IMR-90 (cell line): ENCODE measurements at regions of chr12 and their contacts with region 1.

Region 1: GRCh38 chr12:48851883-48852733 is at the start of gene DDX23:
- DNase-seq: peak; percentile 97
- ATAC-seq: peak; percentile 98
- H3K4me3 ChIP-seq: peak within 1 kb of the TSS; percentile 78
- H3K27ac ChIP-seq: peak within 1 kb of the TSS; percentile 90
- H3K4me1 ChIP-seq: peaks cover 6% of the 10 kb centered on the region
- H3K27me3 ChIP-seq: peaks cover 6% of the 10 kb centered on the region; the same call in 1 of the 2 replicates
- CTCF ChIP-seq: no peak
- POLR2A ChIP-seq: peak; percentile 68; the same call in 1 of the 2 replicates
- RAD21 ChIP-seq: no peak
- total RNA-seq, gene DDX23: 81.9 and 92.5 TPM in 2 replicates

Region 2: GRCh38 chr12:48472259-48472658 is 379.8 kb before region 1 on chr12 and contains the start of gene ANP32D:
- CTCF ChIA-PET with region 1: no interaction called
- POLR2A ChIA-PET with region 1: no interaction called
- dilution Hi-C with region 1: no loop called
- in situ Hi-C with region 1: no loop called
- intact Hi-C with region 1: no loop called
- DNase-seq: no peak
- ATAC-seq: no peak
- H3K4me3 ChIP-seq: no peak within 1 kb of the TSS
- H3K27ac ChIP-seq: no peak within 1 kb of the TSS
- H3K4me1 ChIP-seq: no peaks in the 10 kb centered on the region
- H3K27me3 ChIP-seq: no peaks in the 10 kb centered on the region
- CTCF ChIP-seq: no peak
- POLR2A ChIP-seq: no peak
- RAD21 ChIP-seq: no peak
- total RNA-seq, gene ANP32D: not detected in 2 replicates

Region 3: DNA sequence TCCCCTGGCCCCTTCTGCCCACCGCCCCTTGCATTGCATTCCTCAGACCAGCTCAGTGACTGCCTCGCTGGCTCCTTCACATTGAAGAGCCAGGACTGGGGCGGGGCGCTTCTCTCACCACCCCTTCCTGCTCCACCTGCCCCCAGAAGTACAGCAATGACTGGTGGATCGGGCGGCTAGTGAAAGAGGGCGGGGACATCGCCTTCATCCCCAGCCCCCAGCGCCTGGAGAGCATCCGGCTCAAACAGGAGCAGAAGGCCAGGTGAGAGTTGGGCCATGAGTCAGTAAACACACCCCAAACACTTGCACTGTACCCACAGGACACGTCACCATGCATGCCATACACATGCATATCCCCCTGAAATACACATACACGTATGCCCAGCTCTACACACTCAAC is 28.0 kb before region 1 on chr12:
- CTCF ChIA-PET with region 1: no interaction called
- POLR2A ChIA-PET with region 1: no interaction called
- dilution Hi-C with region 1: no loop called
- in situ Hi-C with region 1: no loop called
- intact Hi-C with region 1: no loop called
- DNase-seq: no peak
- ATAC-seq: no peak
- H3K4me3 ChIP-seq: no peak overlapping the region
- H3K27ac ChIP-seq: no peak overlapping the region
- H3K4me1 ChIP-seq: peaks cover 8% of the 10 kb centered on the region
- H3K27me3 ChIP-seq: no peaks in the 10 kb centered on the region
- CTCF ChIP-seq: no peak
- POLR2A ChIP-seq: no peak
- RAD21 ChIP-seq: no peak

Region 4: GRCh38 chr12:48882315-48882687 is 30.2 kb after region 1 on chr12:
- CTCF ChIA-PET with region 1: interaction called, 11 read pairs
- POLR2A ChIA-PET with region 1: no interaction called
- dilution Hi-C with region 1: no loop called
- in situ Hi-C with region 1: loop called (anchors 5 kb)
- intact Hi-C with region 1: no loop called
- DNase-seq: peak; percentile 66
- ATAC-seq: peak; percentile 71
- H3K4me3 ChIP-seq: no peak overlapping the region
- H3K27ac ChIP-seq: no peak overlapping the region
- H3K4me1 ChIP-seq: peaks cover 15% of the 10 kb centered on the region
- H3K27me3 ChIP-seq: peaks cover 10% of the 10 kb centered on the region
- CTCF ChIP-seq: no peak
- POLR2A ChIP-seq: no peak
- RAD21 ChIP-seq: no peak

Region 5: DNA sequence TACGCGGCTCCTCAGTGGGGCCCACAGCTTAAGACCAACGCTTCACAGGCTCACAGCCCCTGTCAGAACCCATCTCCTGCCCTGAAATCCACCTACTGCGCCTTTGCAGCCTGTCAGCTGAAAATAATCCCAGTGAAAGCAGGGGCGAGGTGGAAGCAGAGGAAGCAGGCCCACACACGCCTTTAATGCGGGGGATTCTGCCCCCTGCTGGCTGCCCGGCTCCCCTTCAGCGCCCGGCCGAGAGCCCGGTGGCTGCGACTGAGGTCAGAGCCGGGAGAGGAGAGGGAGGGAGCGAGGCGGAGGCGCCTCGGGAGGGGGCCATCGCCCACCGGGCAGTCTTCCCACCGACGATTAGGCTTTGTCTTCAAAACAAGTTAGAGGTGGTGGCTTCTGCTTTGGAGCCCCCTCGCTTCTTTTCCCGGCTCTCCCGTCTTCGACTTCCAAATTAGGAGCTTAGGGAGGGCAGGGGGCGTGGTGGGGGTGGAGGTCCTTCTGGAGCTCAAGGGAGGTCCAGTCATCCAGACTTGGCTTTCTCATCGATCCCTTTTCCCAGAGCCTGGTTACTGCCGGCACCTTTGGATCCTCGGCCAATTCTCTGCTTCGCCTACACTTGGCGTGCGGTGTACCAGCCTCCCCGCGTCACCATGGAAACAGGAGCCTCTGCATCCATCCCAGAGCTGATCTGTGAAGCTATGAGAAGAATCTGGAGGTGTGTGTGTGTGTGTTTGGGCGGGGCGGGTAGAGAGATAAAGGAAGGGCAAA is 38.7 kb after region 1 on chr12:
- CTCF ChIA-PET with region 1: interaction called, 63 read pairs
- POLR2A ChIA-PET with region 1: no interaction called
- dilution Hi-C with region 1: no loop called
- in situ Hi-C with region 1: loop called (anchors 5 kb)
- intact Hi-C with region 1: loop called (anchors 1 kb)
- DNase-seq: peak; percentile 62
- ATAC-seq: peak; percentile 100
- H3K4me3 ChIP-seq: peak overlapping the region; percentile 20; the same call in 1 of the 2 replicates
- H3K27ac ChIP-seq: no peak overlapping the region
- H3K4me1 ChIP-seq: no peaks in the 10 kb centered on the region
- H3K27me3 ChIP-seq: peaks cover 7% of the 10 kb centered on the region
- CTCF ChIP-seq: peak; percentile 94
- POLR2A ChIP-seq: no peak
- RAD21 ChIP-seq: peak; percentile 84

Region 6: DNA sequence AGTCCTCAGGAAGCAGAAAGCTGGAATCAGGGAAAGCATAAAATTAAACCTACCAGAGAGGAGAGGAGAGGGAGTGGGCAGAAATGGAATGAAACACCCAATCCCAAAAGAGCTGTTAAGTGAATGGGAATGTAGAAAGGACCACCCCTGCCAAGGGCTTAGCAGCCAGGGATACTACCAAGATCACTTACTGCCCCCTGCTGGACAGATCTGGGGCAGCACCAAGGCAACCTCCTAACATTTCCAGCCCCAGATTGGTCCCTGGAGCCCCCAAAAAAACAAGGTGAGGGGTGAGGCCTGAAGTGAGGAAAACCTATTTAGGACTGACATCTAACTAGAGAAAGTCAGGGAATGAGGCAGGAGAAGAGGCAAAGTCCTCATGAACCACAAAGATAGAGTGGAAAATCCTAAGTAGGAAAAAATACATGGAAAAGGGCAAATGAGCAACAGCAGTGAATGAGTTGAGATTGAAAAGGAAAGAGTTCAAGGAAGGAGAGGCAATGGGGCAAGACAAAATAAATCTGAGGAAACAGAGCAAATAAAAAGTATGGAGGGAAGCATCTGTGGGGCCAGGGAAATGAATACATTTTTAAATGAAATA is 84.4 kb after region 1 on chr12:
- CTCF ChIA-PET with region 1: interaction called, 9 read pairs
- POLR2A ChIA-PET with region 1: interaction called, 6 read pairs
- dilution Hi-C with region 1: no loop called
- in situ Hi-C with region 1: loop called (anchors 5 kb)
- intact Hi-C with region 1: loop called (anchors 1 kb)
- DNase-seq: peak; percentile 79
- ATAC-seq: peak; percentile 95
- H3K4me3 ChIP-seq: no peak overlapping the region
- H3K27ac ChIP-seq: no peak overlapping the region
- H3K4me1 ChIP-seq: no peaks in the 10 kb centered on the region
- H3K27me3 ChIP-seq: no peaks in the 10 kb centered on the region
- CTCF ChIP-seq: peak; percentile 90
- POLR2A ChIP-seq: no peak
- RAD21 ChIP-seq: peak; percentile 84

Region 7: DNA sequence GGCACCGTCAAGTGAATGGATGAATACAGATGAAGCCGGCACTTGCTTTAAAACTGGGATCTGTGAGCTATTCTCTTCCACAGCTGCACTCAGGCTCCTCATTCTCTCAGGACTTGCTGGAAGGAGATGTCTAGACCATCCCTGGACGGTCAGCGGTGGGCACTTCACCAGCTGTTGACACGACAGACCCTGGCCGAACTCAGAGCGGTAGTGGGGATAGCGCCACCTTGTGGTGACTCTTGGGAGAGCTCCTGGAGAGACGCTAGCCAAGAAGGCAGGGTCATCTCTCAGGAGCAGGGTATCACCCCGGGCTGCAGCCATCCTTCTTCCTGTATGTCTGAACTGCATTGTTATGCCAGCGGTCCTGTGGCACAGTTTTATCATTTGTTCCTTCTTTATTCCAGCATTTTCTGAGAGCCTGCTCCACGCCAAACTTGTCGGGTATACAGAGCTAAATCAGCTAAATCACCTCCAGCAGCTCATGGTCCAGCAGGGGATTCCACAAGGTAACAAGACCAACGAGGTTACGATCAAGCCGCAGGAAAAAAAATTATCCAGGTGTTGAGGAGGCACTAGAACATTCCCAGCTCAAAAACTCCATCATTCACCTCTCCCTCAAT is 136.0 kb after region 1 on chr12:
- CTCF ChIA-PET with region 1: interaction called, 15 read pairs
- POLR2A ChIA-PET with region 1: no interaction called
- dilution Hi-C with region 1: no loop called
- in situ Hi-C with region 1: no loop called
- intact Hi-C with region 1: no loop called
- DNase-seq: peak; percentile 37
- ATAC-seq: peak; percentile 79
- H3K4me3 ChIP-seq: no peak overlapping the region
- H3K27ac ChIP-seq: no peak overlapping the region
- H3K4me1 ChIP-seq: no peaks in the 10 kb centered on the region
- H3K27me3 ChIP-seq: peaks cover 77% of the 10 kb centered on the region
- CTCF ChIP-seq: peak; percentile 70
- POLR2A ChIP-seq: no peak
- RAD21 ChIP-seq: peak; percentile 53

Region 8: DNA sequence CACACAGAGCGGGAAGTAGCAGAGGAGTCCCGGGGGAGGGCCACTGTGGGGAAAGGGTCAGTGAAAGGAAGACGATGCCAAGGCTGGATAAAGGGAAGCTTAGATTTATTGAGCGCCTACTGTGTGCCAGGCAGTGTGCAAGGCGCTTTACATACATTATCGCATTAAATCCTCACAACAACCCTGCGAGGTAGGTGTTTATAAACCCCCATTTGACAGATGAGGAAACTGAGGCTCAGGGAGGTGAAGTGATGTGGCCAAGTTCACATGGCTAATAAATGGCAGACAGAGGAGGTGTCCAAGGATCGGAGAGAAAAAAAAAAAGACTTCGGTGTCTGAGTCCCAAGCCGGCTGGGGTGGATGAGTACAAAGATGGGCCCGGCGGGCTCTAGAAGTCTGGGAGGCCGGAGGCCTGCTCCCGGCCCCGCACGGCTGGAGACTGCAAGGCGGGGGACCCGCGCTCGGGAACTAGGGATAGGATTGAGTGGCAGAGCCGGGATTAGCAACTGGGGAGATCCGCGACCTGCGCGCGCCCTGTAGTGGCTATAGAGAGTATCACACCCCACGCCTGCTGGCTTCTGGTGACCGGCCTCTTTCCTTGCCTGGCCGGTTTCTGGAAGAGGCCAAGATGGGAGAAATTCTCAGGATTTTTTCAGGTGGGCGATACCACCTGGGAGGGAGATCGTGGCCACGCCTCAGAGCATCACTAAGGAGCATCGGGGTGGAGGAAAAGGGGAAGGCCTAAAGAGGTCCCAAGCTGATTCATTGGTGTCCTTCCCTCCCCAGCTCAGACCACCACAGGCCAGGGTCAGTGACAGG is 143.2 kb after region 1 on chr12:
- CTCF ChIA-PET with region 1: interaction called, 5 read pairs
- POLR2A ChIA-PET with region 1: no interaction called
- dilution Hi-C with region 1: no loop called
- in situ Hi-C with region 1: no loop called
- intact Hi-C with region 1: loop called (anchors 1 kb)
- DNase-seq: peak; percentile 73
- ATAC-seq: peak; percentile 77
- H3K4me3 ChIP-seq: no peak overlapping the region
- H3K27ac ChIP-seq: no peak overlapping the region
- H3K4me1 ChIP-seq: peaks cover 12% of the 10 kb centered on the region
- H3K27me3 ChIP-seq: peaks cover 44% of the 10 kb centered on the region
- CTCF ChIP-seq: peak; percentile 85
- POLR2A ChIP-seq: no peak
- RAD21 ChIP-seq: peak; percentile 84